Left cardiac atrium (tissue), 4 donors: ENCODE measurements at regions of chr9 and their contacts with region 1.

Region 1: GRCh38 chr9:15606643-15607472 is 54.0 kb downstream of the CCDC171 start:
- DNase-seq: no peak
- ATAC-seq: no peak

Region 2: GRCh38 chr9:15211160-15211814 is 395.6 kb before region 1 on chr9:
- intact Hi-C with region 1: loop called in 1 of 2 experiments (anchors 5 kb)
- DNase-seq: peak; percentile 40
- ATAC-seq: peak; percentile 53 to 63

Region 3: GRCh38 chr9:15763371-15763770 is 156.5 kb after region 1 on chr9:
- intact Hi-C with region 1: no loop called
- DNase-seq: no peak
- ATAC-seq: no peak